AG04449 (cell line): ENCODE measurements at regions of chr3 and their contacts with region 1.

Region 1: DNA sequence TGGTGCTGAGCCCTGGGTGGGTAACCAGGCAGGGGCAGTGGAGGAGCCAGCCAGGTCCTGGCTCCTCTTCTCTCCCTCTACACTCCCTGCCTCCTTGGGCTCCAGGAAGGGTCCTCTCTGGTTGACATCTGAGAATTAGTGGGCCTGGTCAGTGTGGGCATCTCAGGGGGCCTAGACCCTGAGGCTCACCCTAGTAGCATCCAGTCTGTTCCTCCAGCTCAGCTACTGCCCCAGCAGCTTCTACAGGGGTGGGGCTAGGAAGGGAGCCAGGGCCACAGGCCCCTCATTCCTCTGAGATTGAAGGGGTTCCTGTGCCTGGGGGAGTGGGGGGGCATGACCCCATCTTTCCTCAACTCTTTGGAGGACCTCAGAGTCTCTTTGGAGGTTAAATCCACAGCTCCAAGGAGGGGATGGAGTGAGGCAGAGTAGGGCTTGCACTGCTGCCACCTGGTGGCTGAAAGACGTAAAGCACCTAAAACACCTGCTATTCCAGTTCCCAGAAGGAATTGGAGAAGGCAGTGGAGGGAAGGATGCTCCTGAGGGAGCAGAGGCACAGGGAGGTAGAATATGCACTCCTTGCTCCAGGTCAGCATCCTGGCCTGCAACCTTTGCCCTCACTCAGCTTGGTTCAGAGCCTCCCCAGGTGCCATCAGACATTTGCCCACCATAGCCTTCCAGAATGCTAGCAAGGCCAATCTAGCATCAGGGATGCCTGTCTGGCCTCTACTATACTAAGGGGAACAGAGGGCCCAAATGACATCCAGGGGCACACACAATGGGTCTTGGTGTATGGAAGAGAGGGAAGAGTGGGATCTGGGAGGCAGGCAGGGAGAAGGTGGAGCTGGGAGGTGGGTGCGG is 25.1 kb downstream of the C3orf18 start:
- DNase-seq: no peak
- H3K4me3 ChIP-seq: no peak overlapping the region
- CTCF ChIP-seq: peak; percentile 84

Region 2: GRCh38 chr3:50358911-50359759 is 183.3 kb before region 1 on chr3 and contains the start of gene TMEM115:
- CTCF ChIA-PET with region 1: interaction called, 473 read pairs
- POLR2A ChIA-PET with region 1: no interaction called
- DNase-seq: peak; percentile 95
- H3K4me3 ChIP-seq: peak within 1 kb of the TSS; percentile 99
- CTCF ChIP-seq: no peak

Region 3: DNA sequence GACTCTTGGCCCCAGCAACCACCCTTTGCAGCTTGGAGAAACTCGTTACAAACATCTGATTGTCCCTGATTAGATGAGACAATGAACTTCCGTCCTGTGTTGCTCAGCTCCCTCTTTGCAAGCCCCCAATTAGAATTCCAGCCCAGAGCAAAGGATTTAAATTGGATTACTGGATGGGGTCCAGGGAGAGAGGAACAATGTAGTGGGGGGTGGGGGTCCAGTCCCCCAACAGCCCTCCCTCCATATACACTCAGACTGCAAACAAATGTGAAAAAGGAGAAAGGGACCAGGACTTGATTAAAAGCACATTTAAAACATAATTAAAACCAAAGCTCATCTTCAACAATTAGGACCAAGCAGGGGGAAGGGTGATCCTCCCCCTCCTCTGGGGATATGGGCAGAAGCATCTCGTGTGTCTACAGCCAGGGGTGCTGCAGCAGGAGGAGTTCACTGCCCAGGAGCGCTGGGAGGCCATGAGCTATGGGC is 111.4 kb before region 1 on chr3:
- CTCF ChIA-PET with region 1: interaction called, 54 read pairs
- POLR2A ChIA-PET with region 1: no interaction called
- DNase-seq: no peak
- H3K4me3 ChIP-seq: no peak overlapping the region
- CTCF ChIP-seq: no peak

Region 4: DNA sequence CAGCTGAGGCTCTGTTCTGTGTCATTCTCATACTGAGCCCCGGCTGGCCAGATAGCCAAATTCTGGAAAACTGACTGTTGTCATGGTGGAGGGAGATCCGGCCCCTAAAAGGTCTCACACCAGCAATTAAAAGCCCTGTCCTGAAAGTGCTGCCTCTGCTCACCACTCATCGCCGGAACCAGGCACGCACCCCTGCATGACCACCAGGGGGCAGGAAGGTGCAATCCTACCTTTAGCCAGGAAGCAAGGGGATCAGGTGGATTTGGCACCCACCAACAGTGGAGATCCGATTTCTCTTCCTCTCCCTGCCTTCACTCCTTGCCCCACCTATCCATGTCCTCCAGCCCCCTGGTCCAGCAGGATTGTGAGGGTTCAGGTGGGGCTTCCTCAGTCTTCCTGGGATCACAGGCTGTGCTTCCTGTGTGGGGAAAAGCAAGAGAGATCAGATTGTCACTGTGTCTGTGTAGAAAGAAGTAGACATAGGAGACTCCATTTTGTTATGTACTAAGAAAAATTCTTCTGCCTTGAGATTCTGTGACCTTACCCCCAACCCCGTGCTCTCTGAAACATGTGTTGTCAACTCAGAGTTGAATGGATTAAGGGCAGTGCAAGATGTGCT is 22.8 kb before region 1 on chr3:
- CTCF ChIA-PET with region 1: interaction called, 62 read pairs
- POLR2A ChIA-PET with region 1: no interaction called
- DNase-seq: no peak
- H3K4me3 ChIP-seq: no peak overlapping the region
- CTCF ChIP-seq: peak; percentile 96